Ovary (tissue), 10 donors: ENCODE measurements at regions of chr12 and their contacts with region 1.

Region 1: DNA sequence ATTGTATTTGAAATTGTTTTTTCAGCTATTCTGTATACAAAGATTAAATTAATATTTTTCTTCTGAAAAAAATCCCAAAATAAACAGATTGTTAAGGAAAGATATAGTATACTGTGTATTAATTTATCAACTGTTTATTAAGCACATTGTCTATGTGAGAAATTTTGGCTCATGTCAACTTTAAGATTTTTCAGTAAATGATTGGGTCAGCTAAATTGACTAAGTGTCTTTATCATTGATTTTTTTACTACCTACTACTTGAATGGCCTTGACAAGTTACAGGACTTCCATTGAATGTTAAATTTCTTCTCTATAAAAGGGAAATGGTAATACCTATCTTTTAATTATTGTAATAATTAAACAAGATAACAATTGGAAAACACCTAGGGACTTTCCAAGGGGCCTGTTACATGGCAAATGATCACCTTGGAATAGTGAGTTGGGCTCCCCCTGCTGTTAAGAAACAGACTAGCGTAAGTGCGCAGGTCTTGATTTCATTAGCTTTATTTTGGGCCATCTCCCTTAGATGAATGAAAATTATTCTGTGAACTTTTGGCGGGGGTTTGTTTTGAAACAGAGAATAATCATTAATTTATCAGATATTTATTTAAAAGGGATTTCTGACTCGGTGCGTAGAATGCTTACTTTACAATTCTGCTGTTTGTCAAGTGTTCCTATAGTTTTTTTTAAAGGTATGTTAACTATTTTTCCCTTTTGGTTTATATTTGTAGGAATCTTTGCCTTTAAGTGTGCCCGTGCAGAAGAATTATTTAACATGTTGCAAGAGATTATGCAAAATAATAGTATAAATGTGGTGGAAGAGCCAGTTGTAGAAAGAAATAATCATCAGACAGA is 14.5 kb upstream of the CCT2 start:
- DNase-seq: peak in 4 of 5 donors; percentile 28 to 66 (median 45)
- H3K4me3 ChIP-seq: no peak overlapping the region
- H3K27ac ChIP-seq: no peak overlapping the region
- H3K4me1 ChIP-seq: no peaks in the 10 kb centered on the region
- H3K27me3 ChIP-seq: no peaks in the 10 kb centered on the region
- CTCF ChIP-seq: peak; percentile 52 to 73 (median 71)
- EP300 ChIP-seq: no peak
- POLR2A ChIP-seq: no peak

Region 2: DNA sequence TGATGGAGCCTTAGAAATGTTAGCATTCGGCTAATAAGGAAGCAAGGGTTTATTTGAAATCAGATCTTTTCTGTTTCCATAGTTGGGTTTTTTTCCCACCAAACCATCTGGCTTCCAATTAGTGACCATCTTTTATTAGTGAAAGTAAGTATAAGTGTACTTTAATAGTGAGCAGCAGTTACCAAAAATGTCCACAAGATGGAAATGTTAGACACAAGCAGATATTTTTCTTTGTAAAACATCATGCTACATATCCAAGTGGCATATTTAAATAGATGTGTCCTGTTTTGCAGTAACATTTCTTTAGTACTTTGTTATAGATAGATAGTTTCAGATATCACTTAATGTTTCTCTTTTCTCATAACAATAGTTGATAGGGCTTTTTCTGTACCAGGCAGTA is 182.4 kb before region 1 on chr12:
- intact Hi-C with region 1: loop called in 1 of 4 experiments (anchors 10 kb)
- DNase-seq: no peak
- H3K4me3 ChIP-seq: no peak overlapping the region
- H3K27ac ChIP-seq: no peak overlapping the region
- H3K4me1 ChIP-seq: no peaks in the 10 kb centered on the region
- H3K27me3 ChIP-seq: no peaks in the 10 kb centered on the region
- CTCF ChIP-seq: peak in 1 of 3 donors; percentile 31
- EP300 ChIP-seq: no peak
- POLR2A ChIP-seq: no peak

Region 3: GRCh38 chr12:69415471-69416275 is 155.1 kb before region 1 on chr12:
- intact Hi-C with region 1: loop called in 2 of 4 experiments (anchors 2 to 5 kb)
- DNase-seq: peak; percentile 44 to 69 (median 51)
- H3K4me3 ChIP-seq: no peak overlapping the region
- H3K27ac ChIP-seq: peak overlapping the region in 1 of 2 donors; percentile 31
- H3K4me1 ChIP-seq: no peaks in the 10 kb centered on the region
- H3K27me3 ChIP-seq: no peaks in the 10 kb centered on the region
- CTCF ChIP-seq: peak; percentile 39 to 74 (median 74)
- EP300 ChIP-seq: no peak
- POLR2A ChIP-seq: no peak

Region 4: GRCh38 chr12:69470189-69471075 is 100.3 kb before region 1 on chr12 and contains the start of gene FRS2:
- intact Hi-C with region 1: loop called in 2 of 4 experiments (anchors 10 kb)
- DNase-seq: peak; percentile 89 to 94 (median 92)
- H3K4me3 ChIP-seq: peak within 1 kb of the TSS; percentile 100
- H3K27ac ChIP-seq: peak within 1 kb of the TSS; percentile 59 to 73
- H3K4me1 ChIP-seq: peaks cover 13% of the 10 kb centered on the region
- H3K27me3 ChIP-seq: no peaks in the 10 kb centered on the region
- CTCF ChIP-seq: no peak
- EP300 ChIP-seq: no peak
- POLR2A ChIP-seq: peak; percentile 81
- total RNA-seq, gene FRS2: 39.9 to 64.2 (median 45.7) TPM

Region 5: DNA sequence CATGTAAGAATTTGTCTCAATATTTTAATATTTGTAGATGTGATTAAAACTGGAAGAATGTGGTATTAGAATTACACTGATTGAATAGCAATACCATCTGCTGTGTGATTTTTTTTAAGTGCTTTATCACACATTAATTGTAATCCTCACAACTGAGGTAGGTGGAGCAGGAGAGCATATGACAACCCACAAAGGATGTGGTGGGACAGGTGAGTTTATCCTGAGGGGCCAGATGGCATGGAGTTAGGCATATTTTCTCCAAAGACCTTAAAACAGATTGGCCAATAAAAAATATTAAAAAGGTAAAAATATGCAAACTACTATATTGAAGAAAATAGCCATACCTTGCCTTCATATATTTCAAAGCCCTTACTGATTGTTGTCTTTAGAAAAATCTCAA is 32.2 kb after region 1 on chr12:
- intact Hi-C with region 1: no loop called
- DNase-seq: no peak
- H3K4me3 ChIP-seq: no peak overlapping the region
- H3K27ac ChIP-seq: no peak overlapping the region
- H3K4me1 ChIP-seq: no peaks in the 10 kb centered on the region
- H3K27me3 ChIP-seq: no peaks in the 10 kb centered on the region
- CTCF ChIP-seq: no peak
- EP300 ChIP-seq: no peak
- POLR2A ChIP-seq: no peak

Region 6: DNA sequence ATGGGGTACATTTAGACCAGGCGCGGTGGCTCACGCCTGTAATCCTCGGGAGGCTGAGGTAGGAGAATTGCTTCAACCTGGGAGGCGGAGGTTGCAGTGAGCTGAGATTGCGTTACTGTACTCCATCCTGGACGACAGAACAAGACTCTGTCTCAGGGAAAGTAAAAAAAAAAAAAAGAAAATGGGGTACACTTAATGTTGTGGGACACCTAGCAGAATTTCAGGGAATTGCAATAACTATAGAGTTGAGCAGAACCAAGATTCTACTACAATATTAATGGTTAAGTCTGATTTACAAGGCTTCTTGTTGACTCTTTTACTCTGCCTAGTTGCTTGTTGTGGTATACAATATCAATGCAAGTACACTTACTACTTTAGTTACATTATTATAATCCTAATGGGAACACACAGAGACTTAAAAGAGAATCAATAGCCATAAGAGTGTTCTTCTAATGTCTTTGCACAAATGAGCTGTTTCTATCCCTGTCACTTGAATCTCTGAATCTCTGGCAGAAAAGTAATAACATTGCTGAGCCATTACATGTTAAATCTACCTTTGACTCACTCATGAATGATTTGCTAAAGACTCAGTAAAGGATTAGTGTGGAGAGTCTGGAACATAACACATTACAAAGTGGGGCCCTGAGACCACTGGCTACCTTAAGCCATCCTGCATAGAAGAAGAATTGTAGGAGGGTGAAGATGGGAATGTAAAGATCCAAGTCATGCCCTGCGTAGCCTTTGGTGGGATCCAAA is 105.7 kb after region 1 on chr12:
- intact Hi-C with region 1: no loop called
- DNase-seq: no peak
- H3K4me3 ChIP-seq: no peak overlapping the region
- H3K27ac ChIP-seq: no peak overlapping the region
- H3K4me1 ChIP-seq: no peaks in the 10 kb centered on the region
- H3K27me3 ChIP-seq: no peaks in the 10 kb centered on the region
- CTCF ChIP-seq: no peak
- EP300 ChIP-seq: no peak
- POLR2A ChIP-seq: no peak